A673 (cell line): ENCODE measurements at regions of chr6 and their contacts with region 1.

Region 1: DNA sequence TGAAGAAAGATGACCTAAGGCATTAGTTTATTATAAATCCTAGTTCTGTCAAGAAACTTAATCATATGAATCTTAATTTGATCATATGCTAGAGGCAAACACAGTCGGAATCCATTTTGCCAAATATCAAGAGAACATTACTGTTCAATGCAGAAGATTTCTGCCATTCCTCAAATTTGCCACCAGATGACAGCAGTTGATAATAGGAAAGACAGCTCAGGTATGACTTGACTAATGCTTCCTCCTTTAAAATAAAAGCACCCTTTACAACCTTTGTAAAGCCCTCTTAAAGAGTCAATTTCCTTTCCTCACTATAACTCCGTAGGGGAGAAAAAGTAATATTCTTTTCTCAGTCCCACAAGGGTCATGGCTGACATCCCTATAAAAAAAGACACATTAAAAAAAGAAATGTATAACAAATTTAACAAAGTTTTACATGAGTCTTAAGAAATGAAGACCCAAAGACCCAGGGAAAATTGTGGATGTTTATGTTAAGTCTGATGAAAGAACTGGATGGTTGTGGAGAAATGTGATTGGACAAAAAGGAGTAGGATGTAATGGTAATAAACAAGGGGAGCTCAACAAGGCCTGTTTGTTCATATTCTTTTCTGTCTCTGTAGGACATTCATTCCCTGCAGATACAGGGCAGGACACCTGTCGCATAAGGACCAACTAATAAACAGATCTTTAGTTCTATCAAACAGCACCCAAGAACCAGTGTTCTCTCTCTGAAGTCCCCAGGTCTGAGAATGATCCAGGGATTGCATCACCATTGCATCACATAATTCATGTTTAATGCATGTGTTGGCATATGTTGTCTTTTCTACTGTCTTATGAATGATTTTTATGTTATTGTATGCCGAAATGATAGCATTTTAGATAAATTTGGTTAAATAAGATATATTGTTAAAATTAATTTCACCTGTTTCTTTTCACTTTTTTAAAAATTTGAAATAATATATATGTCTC is 23.0 kb upstream of the IL17A start:
- DNase-seq: peak; percentile 65
- H3K4me3 ChIP-seq: no peak overlapping the region
- H3K27ac ChIP-seq: peak overlapping the region; percentile 23
- H3K4me1 ChIP-seq: peaks cover 17% of the 10 kb centered on the region
- H3K27me3 ChIP-seq: no peaks in the 10 kb centered on the region
- CTCF ChIP-seq: peak; percentile 77

Region 2: DNA sequence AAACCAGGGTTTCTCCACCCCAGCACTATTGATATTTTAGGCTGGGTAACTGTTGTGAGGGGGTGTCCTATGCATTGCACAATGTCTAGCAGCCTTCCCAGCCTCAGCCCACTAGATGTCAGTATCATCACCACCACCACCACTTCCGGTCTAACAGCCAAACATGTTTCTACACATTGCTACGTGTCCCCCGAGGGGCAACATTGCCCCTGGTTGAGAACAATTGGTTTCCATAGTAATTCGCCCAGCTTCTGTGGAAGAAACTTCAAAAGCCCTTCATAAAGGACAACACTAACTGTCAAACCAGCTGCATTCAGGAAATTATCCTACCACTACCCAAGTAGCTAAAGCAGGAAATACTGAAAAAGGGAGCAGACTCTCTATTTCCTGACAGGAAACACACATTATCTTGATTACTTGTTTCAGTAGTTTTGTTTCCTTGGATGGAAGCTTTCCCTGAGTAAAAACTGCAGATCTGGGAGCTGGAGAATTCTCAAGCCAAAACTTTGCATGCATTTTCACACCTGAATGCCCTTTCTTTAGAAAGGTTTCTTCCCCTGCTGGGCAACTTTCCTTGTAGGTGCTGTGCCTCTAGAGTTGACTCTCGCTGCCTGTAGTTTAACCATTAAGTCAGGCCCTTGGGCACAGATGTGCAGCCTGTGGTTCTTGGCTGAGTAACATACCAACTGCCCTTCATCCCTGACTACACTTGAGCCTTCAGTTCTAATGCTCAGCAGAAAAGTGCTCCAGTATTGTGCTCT is 99.5 kb before region 1 on chr6:
- CTCF ChIA-PET with region 1: no interaction called
- POLR2A ChIA-PET with region 1: no interaction called
- intact Hi-C with region 1: loop called (anchors 5 kb)
- DNase-seq: peak; percentile 99
- H3K4me3 ChIP-seq: no peak overlapping the region
- H3K27ac ChIP-seq: peak overlapping the region; percentile 90
- H3K4me1 ChIP-seq: peaks cover 45% of the 10 kb centered on the region
- H3K27me3 ChIP-seq: no peaks in the 10 kb centered on the region
- CTCF ChIP-seq: peak; percentile 88

Region 3: DNA sequence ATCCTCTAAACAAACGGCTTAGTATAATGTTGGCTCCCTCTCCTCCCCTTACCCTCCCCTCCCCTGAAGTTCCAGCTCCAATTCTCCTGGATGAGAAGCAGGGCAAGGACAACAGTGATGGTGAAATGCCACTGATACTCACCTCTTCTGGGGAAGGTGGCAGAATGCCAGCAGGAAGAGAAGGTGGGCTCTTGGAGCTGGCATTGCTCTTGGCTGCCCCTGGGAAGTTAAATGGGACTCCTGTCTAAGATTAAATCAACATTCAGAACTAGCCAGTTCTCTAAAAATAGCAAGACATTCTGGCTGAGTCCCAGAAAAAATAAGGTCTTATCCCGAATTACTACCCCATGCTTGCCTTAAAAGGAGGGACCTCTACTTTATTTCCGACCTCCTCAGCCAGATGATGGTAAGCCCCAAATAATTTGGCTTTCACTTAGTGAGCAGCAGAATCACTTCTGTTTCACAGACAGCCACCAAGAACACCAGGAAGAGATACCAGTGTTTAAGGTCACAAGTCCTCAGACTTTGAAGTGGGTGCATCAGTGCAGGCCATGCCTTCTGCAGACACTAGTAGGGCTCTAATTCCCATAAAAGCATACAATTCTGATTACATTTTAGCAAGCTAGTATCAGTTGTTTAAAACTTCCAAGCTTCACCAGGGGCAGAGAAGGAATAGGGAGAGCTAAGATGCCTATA is 23.1 kb before region 1 on chr6:
- CTCF ChIA-PET with region 1: no interaction called
- POLR2A ChIA-PET with region 1: no interaction called
- intact Hi-C with region 1: no loop called
- DNase-seq: no peak
- H3K4me3 ChIP-seq: no peak overlapping the region
- H3K27ac ChIP-seq: no peak overlapping the region
- H3K4me1 ChIP-seq: no peaks in the 10 kb centered on the region
- H3K27me3 ChIP-seq: no peaks in the 10 kb centered on the region
- CTCF ChIP-seq: no peak

Region 4: DNA sequence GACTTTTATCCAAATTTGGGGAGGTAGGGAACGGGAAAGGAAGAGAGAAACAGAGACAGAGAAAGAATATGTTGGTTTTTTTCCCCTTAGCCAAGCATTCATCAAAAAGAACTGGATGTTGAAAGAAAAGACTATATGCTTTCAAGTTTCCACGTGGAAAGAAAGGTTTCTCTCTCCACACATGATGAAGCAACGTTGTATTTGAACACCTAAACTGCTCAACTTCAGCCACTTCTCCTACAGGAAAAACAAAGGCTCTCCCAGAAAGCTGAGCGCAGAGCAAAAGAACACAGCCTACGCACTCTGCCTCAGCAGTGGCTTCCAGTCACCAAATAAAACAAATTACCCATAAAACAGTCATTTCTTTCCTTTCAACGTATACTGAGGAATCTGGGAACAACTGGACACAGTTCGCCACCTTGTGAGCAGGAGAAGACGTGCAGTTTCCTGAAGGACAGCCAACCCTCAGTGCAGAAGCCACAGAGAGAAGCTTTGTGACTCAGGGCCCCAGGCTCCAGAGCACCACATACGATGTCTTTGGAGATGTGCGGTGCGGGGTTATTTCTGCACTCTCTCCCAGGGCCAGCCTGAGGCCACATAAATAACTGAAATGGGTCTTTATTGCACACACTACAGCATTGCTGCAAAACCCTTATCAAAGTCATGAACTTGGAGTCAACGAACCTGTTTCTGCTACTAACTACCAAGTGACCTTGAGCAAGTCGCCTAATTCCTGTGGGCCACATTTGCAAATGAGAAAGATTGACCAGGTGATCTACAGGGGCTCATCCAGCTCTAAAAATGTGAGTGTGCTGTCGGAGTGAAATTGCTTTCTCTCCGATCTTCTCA is 71.0 kb after region 1 on chr6:
- CTCF ChIA-PET with region 1: interaction called, 18 read pairs
- POLR2A ChIA-PET with region 1: no interaction called
- intact Hi-C with region 1: loop called (anchors 1 kb)
- DNase-seq: peak; percentile 91
- H3K4me3 ChIP-seq: no peak overlapping the region
- H3K27ac ChIP-seq: peak overlapping the region; percentile 1
- H3K4me1 ChIP-seq: peaks cover 16% of the 10 kb centered on the region
- H3K27me3 ChIP-seq: no peaks in the 10 kb centered on the region
- CTCF ChIP-seq: peak; percentile 81

Region 5: DNA sequence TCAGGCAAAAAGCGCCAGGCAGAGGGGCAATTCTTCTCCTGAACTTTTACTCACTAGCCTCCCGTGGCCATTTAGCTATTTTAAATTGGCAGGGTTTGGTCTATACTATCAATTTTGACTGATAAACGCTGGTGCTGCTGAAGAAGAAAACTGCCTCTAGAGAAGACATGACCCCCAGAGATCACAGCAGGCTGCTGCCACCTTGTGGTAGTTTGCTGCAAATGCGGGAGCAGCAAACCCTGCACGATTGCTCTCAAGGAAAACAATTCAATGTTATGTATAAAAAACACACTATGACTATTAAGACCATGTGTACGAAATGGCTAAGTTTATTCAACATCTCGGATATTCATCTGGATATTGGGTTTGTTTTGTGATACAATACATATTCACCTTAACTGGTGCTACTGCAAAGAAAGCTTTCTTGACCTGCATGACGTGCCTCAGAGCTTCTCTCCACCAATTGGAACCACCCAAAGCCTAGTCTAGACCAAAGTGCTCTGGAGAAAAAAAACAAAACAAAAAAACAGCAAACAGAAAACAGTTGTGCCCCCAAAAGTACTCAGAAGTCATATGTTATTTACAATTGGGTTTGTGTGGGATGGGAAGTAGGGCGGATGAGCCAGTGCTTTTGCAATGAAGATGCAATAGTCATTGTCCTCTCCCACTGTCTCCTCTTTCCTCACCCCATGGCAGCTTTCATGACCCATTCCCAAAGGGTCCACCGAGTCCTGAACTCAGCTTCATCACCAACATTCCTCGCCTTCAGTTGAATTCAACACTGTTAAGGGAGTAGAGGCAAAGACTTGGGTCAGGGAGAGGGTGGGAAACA is 100.7 kb after region 1 on chr6:
- CTCF ChIA-PET with region 1: interaction called, 24 read pairs
- POLR2A ChIA-PET with region 1: interaction called, 4 read pairs
- intact Hi-C with region 1: loop called (anchors 1 kb)
- DNase-seq: peak; percentile 79
- H3K4me3 ChIP-seq: no peak overlapping the region
- H3K27ac ChIP-seq: no peak overlapping the region
- H3K4me1 ChIP-seq: no peaks in the 10 kb centered on the region
- H3K27me3 ChIP-seq: no peaks in the 10 kb centered on the region
- CTCF ChIP-seq: peak; percentile 98

Region 6: GRCh38 chr6:52399511-52400312 is 236.5 kb after region 1 on chr6:
- CTCF ChIA-PET with region 1: interaction called, 3 read pairs
- POLR2A ChIA-PET with region 1: no interaction called
- intact Hi-C with region 1: loop called (anchors 1 kb)
- DNase-seq: peak; percentile 58
- H3K4me3 ChIP-seq: no peak overlapping the region
- H3K27ac ChIP-seq: no peak overlapping the region
- H3K4me1 ChIP-seq: no peaks in the 10 kb centered on the region
- H3K27me3 ChIP-seq: no peaks in the 10 kb centered on the region
- CTCF ChIP-seq: peak; percentile 87

Region 7: DNA sequence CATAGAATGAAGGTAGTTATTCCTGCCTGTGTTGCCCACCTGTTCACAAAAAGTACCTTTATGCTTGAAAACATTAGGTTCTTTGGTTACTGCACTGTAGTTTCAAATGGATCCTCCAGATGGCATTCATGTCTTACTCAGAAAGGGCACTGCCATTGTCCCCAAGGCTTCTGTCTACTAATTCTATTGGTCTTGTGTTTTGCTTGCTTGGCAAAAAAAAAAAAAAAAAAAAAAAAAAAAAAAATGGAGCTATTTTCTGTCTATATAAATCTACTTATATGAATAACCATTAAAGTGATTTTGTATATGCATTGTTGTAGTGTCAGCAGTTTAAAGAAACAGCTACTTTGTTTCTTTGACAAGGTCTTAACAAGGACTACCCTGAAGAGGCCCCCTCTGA is 244.2 kb after region 1 on chr6:
- CTCF ChIA-PET with region 1: interaction called, 11 read pairs
- POLR2A ChIA-PET with region 1: no interaction called
- intact Hi-C with region 1: no loop called
- DNase-seq: peak; percentile 77
- H3K4me3 ChIP-seq: no peak overlapping the region
- H3K27ac ChIP-seq: no peak overlapping the region
- H3K4me1 ChIP-seq: no peaks in the 10 kb centered on the region
- H3K27me3 ChIP-seq: no peaks in the 10 kb centered on the region
- CTCF ChIP-seq: peak; percentile 69

Region 8: DNA sequence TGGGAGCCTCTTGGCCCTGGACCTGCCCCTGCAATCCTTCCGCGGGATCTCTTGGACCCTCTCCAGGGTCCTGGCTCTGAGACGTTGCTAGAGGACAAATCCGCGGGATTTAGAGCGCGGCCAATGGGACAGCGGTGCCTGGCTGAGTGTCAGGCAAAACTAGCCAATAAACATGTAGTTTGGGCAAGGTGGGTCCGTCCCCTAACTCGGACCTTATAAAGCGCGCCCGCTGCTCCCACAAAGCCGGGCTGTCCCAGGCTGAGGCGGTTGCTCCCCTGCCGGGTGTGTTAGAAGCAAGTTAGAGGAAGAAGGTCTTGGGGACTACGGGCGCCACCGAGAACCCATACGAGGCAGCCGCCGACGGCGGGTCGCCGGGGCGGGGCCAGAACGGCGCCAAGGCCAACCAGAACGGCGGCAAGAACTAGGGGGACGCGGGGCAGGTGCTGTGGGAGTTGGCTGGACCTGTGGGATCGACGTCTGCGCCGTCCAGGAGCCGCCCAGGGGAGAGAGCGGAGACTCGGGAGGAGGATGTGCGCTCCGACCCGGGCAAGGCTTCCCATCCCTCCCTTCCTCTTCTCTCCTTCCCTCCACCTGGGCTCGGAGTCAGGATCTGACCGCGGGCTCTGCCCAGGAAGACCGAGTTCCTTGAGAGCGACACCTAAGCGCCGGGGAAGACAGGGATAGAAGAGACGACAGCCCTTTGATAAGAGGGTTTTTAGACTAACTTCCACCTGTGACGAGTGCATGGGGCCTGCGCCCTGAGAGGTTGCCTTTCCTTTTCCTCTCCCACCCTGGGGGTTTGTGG is 501.2 kb after region 1 on chr6:
- CTCF ChIA-PET with region 1: no interaction called
- POLR2A ChIA-PET with region 1: no interaction called
- intact Hi-C with region 1: loop called (anchors 5 kb)
- DNase-seq: peak; percentile 97
- H3K4me3 ChIP-seq: peak overlapping the region; percentile 64
- H3K27ac ChIP-seq: peak overlapping the region; percentile 54
- H3K4me1 ChIP-seq: peaks cover 26% of the 10 kb centered on the region
- H3K27me3 ChIP-seq: no peaks in the 10 kb centered on the region
- CTCF ChIP-seq: no peak